ENCODE measurements at regions of chr22 and their contacts with region 1.

Region 1: DNA sequence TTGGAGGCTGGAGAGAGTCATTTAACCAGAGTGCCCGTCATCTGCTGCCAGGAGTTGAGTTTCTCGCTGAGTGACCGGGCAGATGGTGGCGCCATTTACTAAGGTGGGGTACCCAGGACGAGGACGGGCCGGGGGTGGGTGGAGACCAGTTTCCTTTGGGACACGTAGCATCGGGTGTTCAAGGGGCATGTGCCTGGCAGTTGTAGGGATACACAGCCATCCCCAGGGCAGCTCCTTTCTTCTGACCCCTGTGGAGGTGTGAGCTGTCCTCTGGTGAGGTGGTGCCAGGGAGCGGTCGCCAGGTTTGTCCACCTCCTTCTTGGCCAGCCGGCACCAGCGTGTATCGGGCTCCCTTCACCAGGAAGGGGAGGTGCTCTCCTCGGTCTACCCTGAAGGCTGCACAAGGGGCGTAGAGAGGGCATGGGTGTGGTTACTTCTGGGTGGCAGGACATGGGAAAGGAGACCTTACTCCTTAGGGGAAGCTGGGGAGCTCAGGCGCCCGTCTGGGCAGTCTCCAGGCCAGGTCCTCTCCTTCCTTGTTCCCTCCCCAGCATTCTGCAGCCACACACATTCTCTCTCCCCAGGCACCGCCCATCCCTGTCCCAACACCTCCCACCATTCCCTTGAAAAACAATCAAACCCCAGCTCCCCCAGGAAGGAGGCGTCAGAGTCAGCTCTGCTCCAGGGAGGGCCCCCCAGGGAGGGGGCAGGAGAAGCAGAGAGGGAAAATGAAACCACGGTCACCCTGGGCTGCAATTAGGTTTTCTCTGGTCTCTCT is 10.3 kb upstream of the MB start:
- DNase-seq: peak; percentile 75 to 89 (median 86)
- ATAC-seq: peak; percentile 80
- H3K4me3 ChIP-seq: peak overlapping the region; percentile 48 to 51
- H3K27ac ChIP-seq: peak overlapping the region; percentile 84 to 88
- H3K4me1 ChIP-seq: peaks cover 0 to 36% of the 10 kb centered on the region in 2 donors
- H3K27me3 ChIP-seq: no peaks in the 10 kb centered on the region
- CTCF ChIP-seq: peak in 1 of 2 donors; percentile 19

Region 2: GRCh38 chr22:35838855-35839576 is 211.6 kb after region 1 on chr22:
- intact Hi-C with region 1: loop called in 1 of 2 experiments (anchors 5 kb)
- DNase-seq: peak in 3 of 4 donors; percentile 25 to 57 (median 36)
- ATAC-seq: peak; percentile 10
- H3K4me3 ChIP-seq: peak overlapping the region; percentile 43 to 47
- H3K27ac ChIP-seq: peak overlapping the region; percentile 64 to 85
- H3K4me1 ChIP-seq: peaks cover 32 to 52% of the 10 kb centered on the region in 2 donors
- H3K27me3 ChIP-seq: no peaks in the 10 kb centered on the region
- CTCF ChIP-seq: peak in 1 of 2 donors; percentile 30

Region 3: GRCh38 chr22:35860087-35860733 is 232.8 kb after region 1 on chr22:
- intact Hi-C with region 1: no loop called
- DNase-seq: no peak
- ATAC-seq: no peak
- H3K4me3 ChIP-seq: no peak overlapping the region
- H3K27ac ChIP-seq: no peak overlapping the region
- H3K4me1 ChIP-seq: no peaks in the 10 kb centered on the region
- H3K27me3 ChIP-seq: no peaks in the 10 kb centered on the region
- CTCF ChIP-seq: no peak

Region 4: DNA sequence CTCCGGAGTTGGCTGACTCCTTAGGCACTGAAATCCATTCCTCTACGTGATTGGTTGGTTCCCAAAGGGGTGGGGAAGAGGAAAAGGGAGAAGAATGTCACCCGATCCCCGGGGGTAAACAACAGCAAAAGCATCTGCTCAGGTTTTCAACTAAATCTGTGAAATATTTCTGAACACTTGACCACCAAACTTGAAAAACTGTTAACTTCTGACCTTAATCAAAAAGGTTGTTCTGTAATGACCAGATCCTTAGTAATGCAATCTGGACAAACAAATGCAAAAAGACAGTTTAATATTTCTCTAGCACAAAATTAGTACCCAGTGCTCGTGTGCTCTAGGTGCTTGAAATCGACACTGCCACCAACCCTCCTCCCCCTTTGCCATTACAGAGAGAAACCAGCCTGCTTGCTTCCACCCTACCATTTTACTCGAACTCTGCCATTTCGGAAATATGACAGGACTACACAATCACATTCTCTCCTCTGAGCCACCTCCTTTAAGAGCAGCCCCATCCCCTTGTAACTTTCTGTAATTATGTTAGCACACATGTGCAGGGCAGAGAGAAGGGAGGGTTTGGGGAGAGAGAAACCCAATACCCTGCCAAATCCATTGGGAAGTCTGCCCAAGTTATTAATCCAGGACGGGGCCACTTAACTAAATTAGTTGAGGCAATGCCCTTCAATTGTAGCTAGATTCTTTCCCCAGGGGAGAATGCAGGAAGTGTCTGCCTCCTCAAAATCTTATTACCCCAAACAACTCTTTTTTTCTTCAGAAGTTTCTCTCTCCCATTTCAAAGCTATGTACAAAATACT is 287.4 kb after region 1 on chr22:
- intact Hi-C with region 1: loop called in 1 of 2 experiments (anchors 5 kb)
- DNase-seq: peak in 3 of 4 donors; percentile 63 to 93 (median 83)
- ATAC-seq: peak; percentile 96
- H3K4me3 ChIP-seq: peak overlapping the region; percentile 34 to 35
- H3K27ac ChIP-seq: peak overlapping the region; percentile 66 to 80
- H3K4me1 ChIP-seq: peaks cover 18 to 46% of the 10 kb centered on the region in 2 donors
- H3K27me3 ChIP-seq: no peaks in the 10 kb centered on the region
- CTCF ChIP-seq: no peak

Measured in left lung (tissue), 14 donors.